ENCODE measurements at regions of chr17 and their contacts with region 1.

Region 1: DNA sequence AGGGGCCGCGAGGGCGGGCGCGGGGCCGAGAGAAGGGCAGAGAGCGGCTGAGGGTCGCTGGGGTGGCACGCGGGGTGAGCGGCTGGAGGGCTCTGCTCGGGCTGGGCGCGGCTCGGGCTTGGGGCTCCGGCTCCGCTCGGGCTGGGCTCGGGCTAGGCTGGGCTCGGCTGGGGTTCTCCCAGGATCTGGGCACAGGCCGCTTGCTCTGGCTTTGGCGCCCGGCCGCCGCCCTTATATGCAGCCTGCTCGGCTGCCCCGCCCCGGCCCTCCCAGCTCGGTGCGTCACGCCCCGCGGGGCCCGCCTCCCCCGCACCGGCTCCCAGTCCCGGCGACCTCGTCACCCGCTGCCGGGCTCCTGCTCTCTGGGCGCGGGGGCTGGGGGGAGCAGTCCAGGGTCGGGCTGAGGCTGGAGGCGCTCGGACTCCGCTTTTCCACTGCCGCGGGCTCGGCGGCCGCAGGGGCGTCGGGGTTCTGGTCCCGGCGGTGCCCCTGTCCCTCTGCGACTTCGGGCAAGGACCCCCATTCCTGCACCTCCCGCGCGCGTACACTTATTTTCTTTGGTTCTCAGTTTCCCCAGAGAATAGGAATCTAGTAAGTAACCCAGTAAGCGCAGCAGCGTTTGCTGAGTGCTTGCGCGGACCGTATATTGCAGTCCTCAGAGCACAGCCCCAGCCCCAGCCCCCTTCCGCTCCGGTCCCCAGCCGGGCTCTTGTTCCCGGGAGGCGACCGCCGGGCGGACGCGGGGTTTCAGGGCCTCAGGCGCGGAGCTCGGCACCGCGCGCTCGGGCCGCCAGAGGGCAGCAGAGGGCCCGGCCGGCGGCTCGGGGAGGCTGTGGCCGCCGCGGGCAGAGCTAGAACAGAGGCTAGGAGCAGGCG is at the start of gene RASD1:
- DNase-seq: peak; percentile 87 to 92
- ATAC-seq: peak; percentile 81
- total RNA-seq, gene RASD1: 20.9 to 24.6 TPM

Region 2: DNA sequence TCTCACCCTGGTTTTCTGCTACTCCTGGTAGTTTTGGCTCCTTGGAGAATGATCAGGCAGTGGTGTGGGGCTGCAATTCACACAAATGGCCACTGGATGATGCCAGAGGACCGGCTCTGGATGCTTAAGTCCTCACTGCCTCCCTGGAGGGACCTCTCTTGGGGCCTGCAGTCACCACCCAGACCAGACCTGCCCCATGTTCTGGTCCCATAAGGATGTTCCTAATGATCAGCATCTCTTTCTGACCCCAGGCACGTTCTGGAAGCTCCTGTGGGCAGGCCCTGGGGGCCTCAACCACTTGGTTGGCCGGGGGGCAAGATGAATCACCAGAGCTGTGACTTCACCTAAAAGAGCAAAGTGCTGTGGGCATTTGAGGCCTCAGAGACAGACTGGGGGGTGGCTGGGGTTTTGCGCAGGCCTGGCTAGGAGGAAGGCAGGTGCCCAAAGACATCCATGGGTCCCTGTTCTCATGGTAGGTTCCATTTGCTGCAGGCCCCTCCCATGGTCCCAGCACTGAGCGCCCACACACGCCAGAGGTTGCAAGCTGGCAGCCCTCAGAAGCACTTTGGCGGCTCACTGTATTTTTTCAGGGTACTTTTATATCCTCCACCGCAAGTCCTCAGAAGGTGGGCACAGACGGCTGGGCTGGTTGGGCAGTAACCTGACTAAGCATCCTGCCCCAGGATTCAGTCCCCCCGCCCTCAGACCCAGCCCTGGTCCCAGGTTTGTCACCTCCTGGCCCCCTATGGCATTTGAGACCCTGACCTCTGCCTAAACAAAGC is 140.1 kb before region 1 on chr17:
- intact Hi-C with region 1: loop called in 1 of 2 experiments (anchors 10 kb)
- DNase-seq: peak; percentile 43 to 76
- ATAC-seq: peak; percentile 95

Region 3: DNA sequence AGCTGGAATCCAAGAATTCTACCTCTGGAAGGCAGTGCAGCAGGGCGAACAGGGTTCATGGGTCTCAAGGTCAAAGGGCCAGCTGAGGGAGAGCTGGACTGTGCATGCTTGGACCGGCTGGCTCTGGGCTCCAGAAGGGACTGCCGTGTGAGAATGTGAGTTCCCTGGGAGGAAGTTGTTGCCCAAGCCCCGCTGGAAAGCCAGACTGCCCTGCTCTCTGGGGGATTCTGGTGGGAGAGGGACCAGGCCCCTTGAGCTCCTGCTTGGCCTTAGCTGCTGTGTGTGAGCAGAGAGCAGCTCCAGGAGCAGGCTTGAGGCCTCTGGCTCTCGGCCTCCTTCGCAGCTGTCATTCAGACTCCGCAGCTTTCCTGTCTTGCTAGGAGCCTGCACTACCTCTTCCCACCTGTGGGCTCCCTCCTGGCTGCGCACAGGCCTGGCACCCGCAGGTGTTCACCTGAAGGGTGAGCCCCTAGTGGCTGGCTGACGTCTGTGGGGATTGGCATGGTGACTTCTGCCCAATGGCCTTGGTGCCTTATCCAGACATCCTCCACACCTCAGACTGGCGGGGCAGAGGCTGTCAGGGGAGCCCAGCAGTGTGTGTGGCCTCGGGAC is 108.5 kb before region 1 on chr17:
- intact Hi-C with region 1: no loop called
- DNase-seq: peak; percentile 77 to 81
- ATAC-seq: peak; percentile 97

Region 4: GRCh38 chr17:17467720-17468119 is 28.7 kb before region 1 on chr17:
- intact Hi-C with region 1: no loop called
- DNase-seq: peak; percentile 61 to 79
- ATAC-seq: peak; percentile 99

Region 5: DNA sequence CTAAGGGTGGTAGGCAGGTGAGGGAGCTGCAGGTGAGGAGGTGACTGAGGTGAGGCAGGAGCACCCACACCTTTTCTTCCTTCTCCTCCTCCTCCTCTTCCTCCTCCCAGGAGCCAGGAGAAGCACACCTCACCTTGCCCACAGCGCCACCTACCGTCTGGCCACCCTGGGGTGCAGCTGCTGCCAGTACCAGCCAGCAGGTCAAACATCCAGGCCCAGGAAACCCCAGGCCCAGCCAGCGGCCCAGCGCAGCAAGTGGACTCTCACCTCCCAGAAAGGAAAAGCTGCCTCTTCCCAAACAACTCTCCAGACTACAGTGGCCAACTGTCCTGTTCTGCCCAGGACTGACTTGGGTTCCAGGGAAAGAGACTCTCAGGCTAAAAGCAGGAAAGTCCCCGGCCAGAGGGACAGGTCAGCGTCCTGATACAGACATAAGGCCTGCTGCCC is 72.3 kb after region 1 on chr17:
- intact Hi-C with region 1: loop called in 1 of 2 experiments (anchors 10 kb)
- DNase-seq: peak; percentile 63 to 89
- ATAC-seq: peak; percentile 71

Region 6: GRCh38 chr17:17641621-17642409 is 145.4 kb after region 1 on chr17:
- intact Hi-C with region 1: loop called in 1 of 2 experiments (anchors 5 kb)
- DNase-seq: peak; percentile 62 to 75
- ATAC-seq: peak; percentile 89